T-cell (primary cell): ENCODE measurements at regions of chr2 and their contacts with region 1.

Region 1: GRCh38 chr2:45180779-45181178 is 171.5 kb upstream of the SIX2 start:
- DNase-seq: no peak
- ATAC-seq: no peak
- H3K4me3 ChIP-seq: no peak overlapping the region
- H3K4me3 Mint-ChIP-seq: no peak overlapping the region
- H3K27ac ChIP-seq: no peak overlapping the region
- H3K27ac Mint-ChIP-seq: no peak overlapping the region
- H3K4me1 ChIP-seq: no peaks in the 10 kb centered on the region
- H3K4me1 Mint-ChIP-seq: no peaks in the 10 kb centered on the region
- H3K27me3 ChIP-seq: peaks cover 0 to 16% of the 10 kb centered on the region in 2 experiments
- H3K27me3 Mint-ChIP-seq: peaks cover 9 to 10% of the 10 kb centered on the region in 2 donors

Region 2: DNA sequence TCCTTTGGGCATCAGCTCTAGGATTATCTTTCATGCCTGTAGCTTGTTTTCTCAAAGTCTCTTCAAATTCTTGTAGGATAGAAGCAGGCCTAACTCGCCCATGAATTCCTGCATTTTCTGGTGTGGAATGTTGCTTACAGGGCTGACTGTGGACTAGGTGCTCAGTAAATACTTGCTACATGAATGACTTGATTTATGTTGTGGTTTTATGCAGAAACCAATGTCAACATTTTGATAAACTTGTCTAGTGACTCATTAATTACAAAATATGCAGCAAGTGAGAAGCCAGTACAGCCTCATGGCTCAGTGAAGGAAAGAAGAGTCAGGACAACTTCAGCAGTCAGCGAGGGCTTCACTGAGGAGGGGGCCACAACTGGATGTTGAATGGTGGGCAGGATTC is 60.9 kb before region 1 on chr2:
- CTCF ChIA-PET with region 1: no interaction called
- POLR2A ChIA-PET with region 1: interaction called in 1 of 2 experiments, 14 read pairs
- DNase-seq: no peak
- ATAC-seq: no peak
- H3K4me3 ChIP-seq: no peak overlapping the region
- H3K4me3 Mint-ChIP-seq: no peak overlapping the region
- H3K27ac ChIP-seq: no peak overlapping the region
- H3K27ac Mint-ChIP-seq: no peak overlapping the region
- H3K4me1 ChIP-seq: no peaks in the 10 kb centered on the region
- H3K4me1 Mint-ChIP-seq: no peaks in the 10 kb centered on the region
- H3K27me3 ChIP-seq: no peaks in the 10 kb centered on the region
- H3K27me3 Mint-ChIP-seq: peaks cover 3 to 6% of the 10 kb centered on the region in 2 donors